PC-3 (cell line): ENCODE measurements at regions of chr5 and their contacts with region 1.

Region 1: GRCh38 chr5:131685516-131686171 is 50.6 kb upstream of the RAPGEF6 start:
- DNase-seq: no peak
- ATAC-seq: peak; percentile 64; the same call in 1 of the 2 replicates
- H3K4me3 ChIP-seq: no peak overlapping the region
- H3K27ac ChIP-seq: no peak overlapping the region
- H3K4me1 ChIP-seq: no peaks in the 10 kb centered on the region
- H3K27me3 ChIP-seq: no peaks in the 10 kb centered on the region
- CTCF ChIP-seq: no peak

Region 2: GRCh38 chr5:131563434-131564228 is 122.0 kb before region 1 on chr5:
- CTCF ChIA-PET with region 1: no interaction called
- POLR2A ChIA-PET with region 1: no interaction called
- intact Hi-C with region 1: no loop called
- DNase-seq: no peak
- ATAC-seq: no peak
- H3K4me3 ChIP-seq: no peak overlapping the region
- H3K27ac ChIP-seq: no peak overlapping the region
- H3K4me1 ChIP-seq: no peaks in the 10 kb centered on the region
- H3K27me3 ChIP-seq: no peaks in the 10 kb centered on the region
- CTCF ChIP-seq: peak; percentile 10; the same call in 1 of the 2 replicates

Region 3: DNA sequence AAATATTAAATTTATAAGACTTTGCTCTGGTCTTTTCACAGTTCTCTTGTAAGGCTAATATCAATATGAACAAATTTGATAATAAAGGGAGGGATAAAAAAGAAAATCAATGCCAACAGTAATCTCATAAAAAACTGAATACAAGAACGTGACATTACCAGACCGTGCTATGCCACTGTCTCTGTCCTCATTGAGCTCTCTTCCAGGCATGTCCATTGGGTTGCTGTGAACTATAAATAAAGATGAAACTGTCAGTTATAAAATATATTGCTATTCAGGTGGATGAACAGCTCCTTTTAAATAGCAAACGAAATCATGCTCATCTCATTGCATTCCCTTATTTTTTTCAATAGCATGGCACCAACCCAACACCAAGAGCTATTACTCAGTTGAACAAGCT is 23.4 kb after region 1 on chr5:
- CTCF ChIA-PET with region 1: no interaction called
- POLR2A ChIA-PET with region 1: no interaction called
- intact Hi-C with region 1: loop called (anchors 1 kb)
- DNase-seq: no peak
- ATAC-seq: no peak
- H3K4me3 ChIP-seq: no peak overlapping the region
- H3K27ac ChIP-seq: no peak overlapping the region
- H3K4me1 ChIP-seq: no peaks in the 10 kb centered on the region
- H3K27me3 ChIP-seq: no peaks in the 10 kb centered on the region
- CTCF ChIP-seq: no peak

Region 4: DNA sequence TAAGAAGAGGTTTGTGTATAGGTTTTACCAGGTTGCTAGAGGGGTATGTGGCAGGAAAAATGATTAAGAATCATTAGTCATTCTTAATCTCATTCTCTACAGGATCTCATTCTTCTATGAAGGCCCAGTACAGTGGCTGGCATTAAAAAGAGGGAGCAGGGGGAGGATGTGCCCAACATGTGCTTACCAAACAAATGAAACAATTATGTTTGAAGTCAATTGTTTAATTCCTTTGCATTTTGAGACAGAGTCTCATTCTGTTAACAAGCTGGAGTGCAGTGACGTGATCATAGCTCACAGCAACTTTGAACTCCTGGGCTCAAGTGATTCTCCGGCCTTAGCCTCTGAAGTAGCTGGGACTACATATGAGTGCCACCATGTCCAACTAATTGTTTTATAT is 88.2 kb after region 1 on chr5:
- CTCF ChIA-PET with region 1: no interaction called
- POLR2A ChIA-PET with region 1: no interaction called
- intact Hi-C with region 1: no loop called
- DNase-seq: peak; percentile 26
- ATAC-seq: peak; percentile 76
- H3K4me3 ChIP-seq: no peak overlapping the region
- H3K27ac ChIP-seq: peak overlapping the region; percentile 20; the same call in 1 of the 2 replicates
- H3K4me1 ChIP-seq: peaks cover 21% of the 10 kb centered on the region
- H3K27me3 ChIP-seq: no peaks in the 10 kb centered on the region
- CTCF ChIP-seq: no peak